Left colon (tissue), 2 donors: ENCODE measurements at regions of chr12 and their contacts with region 1.

Region 1: GRCh38 chr12:53065975-53066931 is 12.9 kb downstream of the SPRYD3 start:
- DNase-seq: peak; percentile 71 to 83
- ATAC-seq: peak; percentile 51

Region 2: DNA sequence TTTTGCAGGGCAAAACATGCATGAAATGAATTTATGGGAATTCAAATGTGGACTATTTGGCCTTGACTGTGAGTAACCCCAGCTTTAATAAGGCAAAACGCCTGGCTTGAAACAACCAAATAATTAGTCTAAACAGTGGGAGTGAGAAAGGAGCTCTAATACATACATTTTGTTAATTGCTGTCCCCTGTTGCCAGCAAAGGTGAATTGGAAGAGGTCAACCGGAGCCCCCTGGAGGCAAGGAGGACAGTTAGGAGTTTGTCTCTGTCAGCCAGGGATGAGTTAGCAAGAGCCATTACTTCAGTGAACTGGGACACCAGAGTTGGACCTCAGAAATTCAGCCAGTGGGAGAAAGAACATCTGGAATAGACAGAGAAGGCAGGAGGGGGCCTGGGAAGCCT is 306.6 kb before region 1 on chr12:
- intact Hi-C with region 1: no loop called
- DNase-seq: no peak
- ATAC-seq: no peak

Region 3: GRCh38 chr12:53098982-53099651 is 32.9 kb after region 1 on chr12:
- intact Hi-C with region 1: loop called in 1 of 2 experiments (anchors 5 kb)
- DNase-seq: peak; percentile 78 to 88
- ATAC-seq: peak; percentile 36

Region 4: DNA sequence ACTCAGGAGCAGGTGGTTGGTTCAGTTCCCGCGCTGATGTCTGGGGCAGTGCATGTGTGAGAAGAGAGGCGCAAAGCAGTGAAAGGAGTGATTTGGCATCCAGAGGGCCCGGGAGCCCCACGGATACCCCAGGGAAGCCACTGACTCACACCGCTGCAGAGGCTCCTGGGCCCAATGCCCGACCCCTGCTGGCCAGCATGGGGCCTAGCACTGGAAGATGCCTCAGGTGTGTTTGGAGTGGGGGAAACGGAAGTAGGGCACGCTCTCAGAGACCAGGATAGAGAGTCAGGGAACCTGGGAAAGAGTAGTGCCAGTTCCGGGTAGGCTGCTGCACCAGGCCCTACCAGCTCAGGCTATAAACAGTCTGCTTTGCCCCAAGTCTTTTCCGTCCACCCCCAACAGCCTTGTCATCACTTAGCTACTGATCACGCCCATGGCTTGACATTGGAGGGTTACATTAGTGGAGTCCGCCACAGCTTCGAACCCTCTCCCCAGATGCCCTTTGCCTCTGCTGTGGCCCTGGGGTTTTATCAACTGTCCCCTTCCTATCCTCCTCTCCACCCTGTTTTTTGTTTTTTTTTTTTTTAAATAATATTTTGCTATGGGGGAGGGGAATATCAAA is 124.0 kb after region 1 on chr12:
- intact Hi-C with region 1: loop called in 1 of 2 experiments (anchors 10 kb)
- DNase-seq: peak; percentile 47 to 49
- ATAC-seq: peak; percentile 87

Region 5: GRCh38 chr12:53781228-53781801 is 715.1 kb after region 1 on chr12:
- intact Hi-C with region 1: no loop called
- DNase-seq: no peak
- ATAC-seq: no peak